Common myeloid progenitor, CD34-positive (primary cell): ENCODE measurements at regions of chr16 and their contacts with region 1.

Region 1: DNA sequence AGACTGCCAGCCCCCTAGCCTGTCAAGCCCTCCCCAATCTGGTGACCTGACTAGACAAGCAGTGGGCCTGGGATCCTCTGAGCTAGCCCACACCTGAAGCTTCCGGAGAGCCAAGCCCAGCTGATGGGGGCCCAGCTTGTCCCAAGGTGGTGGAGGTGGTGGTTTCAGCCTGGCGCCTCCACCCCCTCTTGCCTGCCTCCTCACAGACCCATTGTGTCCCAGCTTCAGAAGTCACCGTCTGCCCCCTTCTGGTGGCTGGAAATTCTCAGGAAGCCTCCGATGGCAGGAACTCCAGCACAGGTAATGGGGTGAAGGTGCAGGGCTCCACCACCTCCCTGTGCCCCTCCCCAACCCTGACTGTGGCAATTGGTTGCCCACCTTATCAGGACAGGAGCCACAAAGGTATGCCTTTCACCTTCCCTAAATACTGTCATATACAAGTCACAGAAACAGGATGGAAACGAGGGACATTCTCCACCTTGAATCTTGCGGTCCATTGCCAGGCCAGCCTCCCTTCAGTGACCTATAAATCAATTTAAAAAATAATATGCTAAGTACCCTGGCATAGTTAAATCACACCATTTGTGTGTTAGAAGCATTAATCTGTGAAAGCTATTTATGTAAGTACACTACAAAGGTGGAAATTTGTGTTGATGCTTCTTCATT is 66.0 kb upstream of the ZNF423 start:
- DNase-seq: peak; percentile 64 to 80 (median 78)
- H3K4me3 ChIP-seq: no peak overlapping the region
- H3K27ac ChIP-seq: no peak overlapping the region
- H3K4me1 ChIP-seq: peaks cover 0 to 3% (median under 1%) of the 10 kb centered on the region in 4 experiments
- H3K27me3 ChIP-seq: no peaks in the 10 kb centered on the region

Region 2: DNA sequence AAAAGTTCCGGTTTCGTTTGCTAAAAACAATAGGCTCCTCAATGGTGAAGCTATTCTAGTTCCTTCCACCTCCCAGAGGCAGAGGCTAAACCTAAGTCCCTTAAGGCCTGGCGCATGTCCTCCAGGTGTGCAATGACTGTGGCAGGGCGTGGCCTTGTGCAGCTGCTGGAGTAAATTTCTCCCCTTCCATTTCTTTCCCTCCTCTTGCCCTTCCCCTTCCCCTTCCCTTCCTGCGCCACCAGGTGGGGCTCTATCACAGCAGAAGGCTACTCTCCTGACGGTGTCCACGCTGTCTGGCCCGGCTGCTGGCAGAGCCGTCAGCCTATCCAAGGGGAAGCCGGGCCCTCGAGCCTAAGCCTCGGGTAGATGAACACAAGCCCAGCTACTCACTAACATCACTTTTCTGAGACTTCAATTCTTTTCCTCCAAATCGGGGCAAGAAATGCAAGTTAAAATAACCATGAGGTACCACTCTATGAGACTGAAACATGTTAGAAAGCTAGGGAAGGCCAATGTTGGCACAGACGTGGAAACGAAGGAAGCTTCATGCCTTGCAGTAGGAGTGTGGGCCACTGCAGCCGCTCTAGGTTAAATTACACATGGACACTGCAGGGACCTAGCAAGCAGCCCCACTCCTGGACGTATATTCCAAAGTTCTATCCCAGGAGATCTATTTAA is 513.9 kb before region 1 on chr16:
- CTCF ChIA-PET with region 1: interaction called, 29 read pairs
- POLR2A ChIA-PET with region 1: no interaction called
- DNase-seq: peak; percentile 67 to 78 (median 74)
- H3K4me3 ChIP-seq: no peak overlapping the region
- H3K27ac ChIP-seq: no peak overlapping the region
- H3K4me1 ChIP-seq: peaks cover 0 to 4% (median 0%) of the 10 kb centered on the region in 4 experiments
- H3K27me3 ChIP-seq: no peaks in the 10 kb centered on the region

Region 3: GRCh38 chr16:49608779-49609178 is 313.1 kb before region 1 on chr16:
- CTCF ChIA-PET with region 1: interaction called, 18 read pairs
- POLR2A ChIA-PET with region 1: no interaction called
- DNase-seq: peak; percentile 57 to 76 (median 72)
- H3K4me3 ChIP-seq: peak overlapping the region in 1 of 7 experiments; percentile 14
- H3K27ac ChIP-seq: no peak overlapping the region
- H3K4me1 ChIP-seq: peaks cover 7 to 22% (median 13%) of the 10 kb centered on the region in 4 experiments
- H3K27me3 ChIP-seq: no peaks in the 10 kb centered on the region

Region 4: GRCh38 chr16:49866595-49867071 is 55.3 kb before region 1 on chr16:
- CTCF ChIA-PET with region 1: no interaction called
- POLR2A ChIA-PET with region 1: no interaction called
- DNase-seq: no peak
- H3K4me3 ChIP-seq: no peak overlapping the region
- H3K27ac ChIP-seq: no peak overlapping the region
- H3K4me1 ChIP-seq: no peaks in the 10 kb centered on the region
- H3K27me3 ChIP-seq: peaks cover 0 to 6% (median 0%) of the 10 kb centered on the region in 5 experiments

Region 5: DNA sequence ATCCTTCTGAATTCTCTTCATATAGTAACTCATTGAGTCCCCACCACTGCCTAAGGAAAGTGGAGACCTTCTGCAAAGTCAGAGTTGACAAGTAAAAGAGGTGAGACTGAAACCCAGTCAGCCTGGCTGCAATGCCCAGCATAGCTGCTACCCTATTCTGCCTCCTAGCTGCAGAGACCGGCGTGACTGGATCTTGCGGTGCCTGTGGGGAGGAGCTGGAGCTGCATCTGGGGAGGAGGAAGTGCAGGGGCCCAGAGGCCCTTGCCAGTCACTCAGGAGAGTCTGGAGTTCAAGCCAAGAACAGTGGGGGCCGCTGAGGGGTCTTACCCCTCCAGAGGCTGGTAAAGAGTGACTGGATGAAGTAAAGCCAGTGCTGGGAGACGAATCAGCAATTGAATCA is 31.0 kb before region 1 on chr16:
- CTCF ChIA-PET with region 1: interaction called, 15 read pairs
- POLR2A ChIA-PET with region 1: no interaction called
- DNase-seq: peak; percentile 68 to 87 (median 84)
- H3K4me3 ChIP-seq: no peak overlapping the region
- H3K27ac ChIP-seq: no peak overlapping the region
- H3K4me1 ChIP-seq: peaks cover 0 to 6% (median 0%) of the 10 kb centered on the region in 4 experiments
- H3K27me3 ChIP-seq: no peaks in the 10 kb centered on the region

Region 6: GRCh38 chr16:49910541-49911071 is 11.3 kb before region 1 on chr16:
- CTCF ChIA-PET with region 1: interaction called, 20 read pairs
- POLR2A ChIA-PET with region 1: no interaction called
- DNase-seq: no peak
- H3K4me3 ChIP-seq: no peak overlapping the region
- H3K27ac ChIP-seq: no peak overlapping the region
- H3K4me1 ChIP-seq: no peaks in the 10 kb centered on the region
- H3K27me3 ChIP-seq: no peaks in the 10 kb centered on the region